ENCODE measurements at regions of chr11 and their contacts with region 1.

Region 1: DNA sequence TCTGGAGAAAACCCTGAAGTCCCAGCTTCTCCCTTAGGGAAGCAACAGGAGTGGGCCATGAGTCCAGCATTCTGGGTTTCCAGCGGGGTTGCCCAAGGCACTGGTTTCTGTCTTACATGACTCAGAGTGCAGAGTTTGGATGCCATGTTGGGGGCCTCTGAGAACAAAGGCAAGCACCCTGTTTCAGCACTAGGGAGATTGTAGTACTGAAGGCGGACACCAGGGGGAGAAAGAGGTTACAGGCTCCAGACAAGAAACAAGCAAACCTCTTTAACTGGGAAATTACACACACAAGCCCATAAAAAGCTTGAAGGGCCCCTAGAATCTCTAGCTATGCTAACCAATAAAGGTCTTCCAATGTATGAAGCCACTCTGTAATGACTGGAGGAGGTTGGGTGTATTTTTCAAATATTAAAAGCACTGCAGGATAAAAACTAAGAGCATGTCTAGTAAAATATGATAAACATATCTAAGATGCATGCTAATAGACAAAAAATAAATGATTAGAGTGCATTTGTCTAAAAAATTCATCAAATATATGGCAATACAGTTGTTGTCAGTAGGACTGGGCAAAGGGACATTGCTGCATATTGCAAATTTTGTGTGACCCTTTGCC is 7.1 kb downstream of the MS4A6E start:
- DNase-seq: peak; percentile 63
- CTCF ChIP-seq: peak; percentile 64

Region 2: GRCh38 chr11:60274416-60274815 is 59.7 kb before region 1 on chr11:
- CTCF ChIA-PET with region 1: interaction called, 10 read pairs
- POLR2A ChIA-PET with region 1: no interaction called
- DNase-seq: no peak
- CTCF ChIP-seq: no peak

Region 3: GRCh38 chr11:60318726-60319125 is 15.4 kb before region 1 on chr11:
- CTCF ChIA-PET with region 1: interaction called, 45 read pairs
- POLR2A ChIA-PET with region 1: no interaction called
- DNase-seq: no peak
- CTCF ChIP-seq: no peak

Region 4: DNA sequence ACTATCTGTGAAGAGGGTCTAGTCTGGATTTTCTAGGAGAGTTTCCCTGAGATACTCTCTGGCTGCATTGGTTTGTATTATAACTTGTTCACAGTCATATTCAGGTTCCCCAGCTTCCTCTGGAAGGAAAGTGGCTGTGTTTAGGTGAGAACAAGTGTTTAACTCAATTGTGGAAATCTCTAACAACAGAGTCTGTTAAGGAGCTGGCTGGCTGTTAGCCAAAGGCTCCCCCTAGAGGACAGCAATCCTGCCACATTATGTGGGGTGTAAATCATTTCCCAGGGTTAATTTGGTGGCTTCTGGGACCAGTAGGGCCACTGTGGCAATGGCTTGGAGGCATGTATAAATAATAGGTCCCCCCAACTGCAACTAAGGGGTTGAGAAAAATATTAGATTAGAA is 11.4 kb after region 1 on chr11:
- CTCF ChIA-PET with region 1: interaction called, 48 read pairs
- POLR2A ChIA-PET with region 1: no interaction called
- DNase-seq: no peak
- CTCF ChIP-seq: peak; percentile 62

Region 5: DNA sequence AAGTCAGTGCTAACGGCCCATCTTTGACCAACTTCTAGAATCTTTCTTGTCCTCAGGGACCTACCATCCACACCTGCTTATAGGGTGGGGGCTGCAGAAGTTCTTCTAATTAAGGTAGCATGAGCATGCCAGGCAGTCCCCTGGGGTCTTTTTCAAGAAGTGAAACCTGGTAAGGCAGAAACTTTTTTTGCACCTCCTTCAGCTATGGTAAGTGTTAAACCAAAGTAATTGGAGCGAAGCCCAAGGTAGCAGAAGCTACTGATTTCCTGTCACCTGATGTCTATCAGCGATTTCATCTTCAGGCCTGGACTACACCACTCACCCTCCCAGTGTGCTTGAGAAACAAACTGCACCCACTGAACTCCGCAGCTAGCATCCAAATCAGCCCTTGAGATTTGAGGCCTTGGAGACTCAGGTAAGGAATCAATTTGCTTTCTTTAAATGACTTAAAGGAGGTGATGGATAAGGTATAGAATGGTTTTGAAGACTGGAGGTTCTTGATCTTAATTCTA is 121.5 kb after region 1 on chr11 and contains the start of gene MS4A1:
- CTCF ChIA-PET with region 1: interaction called, 10 read pairs
- POLR2A ChIA-PET with region 1: no interaction called
- DNase-seq: peak; percentile 66
- CTCF ChIP-seq: no peak

Measured in GM10248 (cell line).